OCI-LY7 (cell line): ENCODE measurements at regions of chr1 and their contacts with region 1.

Region 1: DNA sequence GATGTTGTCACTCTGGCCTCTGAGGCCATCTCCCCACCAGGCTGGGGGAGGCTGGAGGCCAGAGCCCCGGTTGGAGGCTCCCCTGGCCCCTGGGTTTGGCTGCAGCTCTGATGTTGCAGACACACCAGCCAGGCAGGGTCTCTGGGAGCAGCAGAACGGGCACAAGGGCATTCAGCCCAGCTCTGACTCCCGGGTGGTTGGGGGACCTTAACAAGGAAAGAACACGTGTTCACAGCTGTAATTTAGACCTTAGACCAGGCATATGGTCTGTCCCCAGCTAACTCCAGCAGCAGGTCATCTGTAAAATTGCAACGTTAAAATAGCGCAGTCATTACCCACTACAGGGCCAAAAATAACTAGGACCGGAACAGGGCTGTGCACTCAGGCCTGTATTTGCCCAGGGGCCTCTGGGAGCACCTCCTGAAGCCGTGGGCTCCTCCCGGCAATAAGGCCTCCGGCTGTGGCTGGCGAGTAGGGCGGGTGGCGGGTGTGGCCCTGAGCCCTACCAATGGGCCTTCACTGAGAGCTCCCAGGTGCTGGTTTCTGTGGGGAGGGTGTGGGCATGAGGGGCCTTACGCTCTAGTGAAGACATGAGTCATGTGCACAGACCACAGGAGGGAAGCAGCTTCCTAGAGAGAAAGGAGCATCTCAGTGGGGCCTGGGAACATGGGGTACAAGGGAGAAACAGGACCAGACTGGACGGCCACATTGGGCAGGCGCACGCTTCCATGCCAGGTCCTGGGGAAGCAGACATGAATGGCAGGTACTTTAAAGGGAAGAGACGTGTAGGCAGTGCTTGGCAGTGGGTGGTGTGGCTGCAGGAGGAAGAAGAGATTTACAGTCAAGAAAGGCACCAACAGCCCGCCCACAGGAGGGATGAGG is 6.1 kb downstream of the LDLRAP1 start:
- DNase-seq: peak; percentile 95
- H3K4me3 ChIP-seq: peak overlapping the region; percentile 38
- H3K27ac ChIP-seq: peak overlapping the region; percentile 90
- H3K4me1 ChIP-seq: peaks cover 75% of the 10 kb centered on the region
- CTCF ChIP-seq: no peak

Region 2: DNA sequence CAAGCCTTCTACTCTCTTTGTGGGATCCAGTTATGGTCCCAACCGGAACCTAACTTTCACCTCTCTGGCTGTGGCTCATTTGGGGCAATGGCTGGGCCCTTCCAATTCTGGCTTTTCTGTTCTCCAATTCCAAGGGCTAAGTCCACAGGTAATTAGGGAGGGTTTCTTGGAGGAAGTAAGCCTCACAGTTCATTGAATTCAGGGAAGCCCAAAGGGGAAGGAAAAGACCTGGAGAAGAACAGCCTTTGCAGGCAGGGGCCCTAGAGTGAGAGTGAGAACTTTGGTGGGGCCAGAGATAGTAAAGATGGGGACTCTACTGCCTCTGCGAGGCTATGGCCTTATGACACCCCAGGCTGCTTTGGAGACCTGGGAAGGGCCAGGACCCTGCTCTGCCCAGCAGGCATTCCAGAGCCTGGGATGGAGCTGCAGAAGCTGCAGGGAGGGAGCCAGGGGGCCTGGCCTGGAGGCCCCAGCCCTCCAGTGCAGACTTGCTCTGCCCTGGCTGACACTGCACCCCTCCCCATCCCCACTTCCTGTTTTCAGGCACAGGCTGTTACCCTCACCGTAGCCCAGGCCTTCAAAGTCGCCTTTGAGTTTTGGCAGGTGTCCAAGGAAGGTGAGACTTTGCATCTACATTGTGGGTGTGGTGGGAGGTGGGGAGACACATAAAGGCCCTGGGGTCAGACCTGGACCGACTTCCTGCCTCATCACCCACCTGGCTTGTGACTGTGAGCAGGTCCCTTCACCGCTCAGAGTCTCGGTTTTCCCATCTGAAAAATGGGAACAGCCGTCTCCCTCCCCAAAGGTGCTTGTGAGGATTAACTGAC is 12.8 kb after region 1 on chr1:
- CTCF ChIA-PET with region 1: interaction called, 23 read pairs
- POLR2A ChIA-PET with region 1: interaction called, 51 read pairs
- intact Hi-C with region 1: loop called (anchors 1 kb)
- DNase-seq: peak; percentile 98
- H3K4me3 ChIP-seq: peak overlapping the region; percentile 64
- H3K27ac ChIP-seq: peak overlapping the region; percentile 85
- H3K4me1 ChIP-seq: peaks cover 86% of the 10 kb centered on the region
- CTCF ChIP-seq: no peak

Region 3: DNA sequence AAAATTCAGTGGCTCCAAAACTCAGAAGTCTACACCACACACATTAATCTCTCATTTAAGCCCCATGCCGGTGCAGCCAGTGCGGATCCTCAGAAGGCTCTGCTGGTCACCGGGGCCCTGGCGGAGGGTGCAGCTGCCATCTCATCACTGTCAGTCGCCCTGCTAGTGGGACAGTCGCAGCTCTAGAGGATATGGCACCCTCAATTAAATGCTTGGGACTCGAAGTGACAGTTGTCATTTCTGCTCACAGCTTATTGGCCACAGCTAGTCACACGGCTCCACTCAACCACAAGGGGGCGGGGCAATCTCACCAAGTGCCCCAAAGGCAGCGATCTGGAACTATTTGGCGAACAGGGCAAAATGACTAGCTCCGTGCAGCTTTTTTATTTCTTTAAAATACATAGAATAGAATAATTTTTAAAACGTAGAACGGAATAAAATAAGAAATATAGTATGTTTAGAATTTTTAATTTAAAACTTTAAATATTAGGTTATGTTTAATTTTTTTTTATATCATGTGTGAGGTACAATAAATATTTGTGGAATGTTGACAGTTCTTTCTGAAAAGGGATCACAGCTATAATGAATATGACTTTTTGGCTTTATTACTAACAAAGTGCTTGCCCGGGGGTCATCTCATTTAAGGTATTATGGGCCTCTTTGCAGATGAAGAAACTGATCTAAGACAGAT is 59.1 kb after region 1 on chr1:
- CTCF ChIA-PET with region 1: no interaction called
- POLR2A ChIA-PET with region 1: interaction called, 15 read pairs
- intact Hi-C with region 1: loop called (anchors 1 kb)
- DNase-seq: peak; percentile 96
- H3K4me3 ChIP-seq: no peak overlapping the region
- H3K27ac ChIP-seq: peak overlapping the region; percentile 44
- H3K4me1 ChIP-seq: peaks cover 66% of the 10 kb centered on the region
- CTCF ChIP-seq: peak; percentile 53; the same call in 1 of the 2 replicates

Region 4: DNA sequence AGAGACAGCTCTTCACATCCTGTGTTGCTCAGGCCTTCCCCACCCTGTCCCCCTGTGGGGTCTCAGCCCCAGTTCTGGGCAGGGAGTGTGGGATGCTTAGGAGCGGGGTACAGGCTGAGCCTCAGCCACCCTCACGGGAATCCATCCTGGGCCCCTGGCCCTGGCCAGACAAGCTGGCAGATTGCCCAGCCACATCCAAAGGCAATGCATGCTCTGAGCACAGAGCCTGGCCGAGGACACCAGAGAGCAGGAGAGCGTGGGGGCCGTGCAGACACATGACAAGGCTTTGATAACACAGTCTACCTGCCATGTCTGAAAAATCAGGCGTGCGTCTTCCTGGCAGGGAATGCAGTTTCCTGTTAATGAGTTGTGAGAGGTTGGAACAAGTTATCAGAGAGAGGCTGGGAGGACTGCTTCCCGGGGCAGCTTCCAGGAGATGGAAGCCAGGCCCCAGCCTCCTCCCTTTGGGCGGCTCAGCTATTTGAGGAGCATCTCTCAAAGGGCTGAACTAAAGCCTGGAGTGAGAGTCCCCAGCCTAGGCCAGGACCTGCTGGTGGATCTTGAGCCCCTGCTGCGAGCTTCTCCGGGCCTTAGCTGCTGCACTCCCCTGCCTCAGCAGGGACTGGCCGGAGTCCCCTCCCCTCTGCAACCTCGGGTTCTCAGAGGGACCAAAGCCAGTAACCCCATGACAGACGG is 178.3 kb after region 1 on chr1:
- CTCF ChIA-PET with region 1: no interaction called
- POLR2A ChIA-PET with region 1: no interaction called
- intact Hi-C with region 1: no loop called
- DNase-seq: no peak
- H3K4me3 ChIP-seq: no peak overlapping the region
- H3K27ac ChIP-seq: no peak overlapping the region
- H3K4me1 ChIP-seq: peaks cover 9% of the 10 kb centered on the region
- CTCF ChIP-seq: no peak